Psoas muscle (tissue), 8 donors: ENCODE measurements at regions of chr15 and their contacts with region 1.

Region 1: DNA sequence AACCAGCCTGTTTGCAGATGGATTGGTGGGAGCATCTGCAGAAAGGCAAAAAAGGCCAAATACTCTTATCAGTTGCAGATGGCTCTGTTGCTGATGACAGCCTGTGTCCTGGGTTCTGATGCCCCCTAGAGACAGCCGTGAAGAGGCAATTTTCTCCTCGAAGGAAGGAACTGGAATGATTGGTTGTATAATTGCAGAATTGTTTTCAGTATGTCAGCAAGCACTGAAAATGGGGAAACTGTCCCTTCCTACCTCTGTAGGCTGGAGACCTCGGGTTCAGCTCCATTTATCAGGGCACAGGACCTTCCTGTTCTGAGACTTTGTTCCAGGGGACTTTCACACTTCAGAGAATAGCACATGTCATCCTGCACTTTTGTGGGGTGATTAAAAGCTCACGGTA is 103.0 kb downstream of the PGPEP1L start:
- DNase-seq: no peak
- ATAC-seq: peak in 3 of 4 donors; percentile 41 to 64 (median 58)
- H3K4me3 ChIP-seq: no peak overlapping the region
- H3K27ac ChIP-seq: no peak overlapping the region
- H3K4me1 ChIP-seq: peaks cover 11% of the 10 kb centered on the region
- H3K27me3 ChIP-seq: no peaks in the 10 kb centered on the region
- CTCF ChIP-seq: peak; percentile 46

Region 2: GRCh38 chr15:98442379-98442833 is 462.1 kb before region 1 on chr15:
- intact Hi-C with region 1: loop called in 1 of 2 experiments (anchors 10 kb)
- DNase-seq: no peak
- ATAC-seq: peak in 3 of 4 donors; percentile 53 to 64 (median 54)
- H3K4me3 ChIP-seq: no peak overlapping the region
- H3K27ac ChIP-seq: no peak overlapping the region
- H3K4me1 ChIP-seq: no peaks in the 10 kb centered on the region
- H3K27me3 ChIP-seq: peaks cover 0 to 7% (median 4%) of the 10 kb centered on the region in 3 donors
- CTCF ChIP-seq: peak; percentile 60